ENCODE measurements at regions of chr5 and their contacts with region 1.

Region 1: GRCh38 chr5:122845229-122846050 is at the start of gene SNX24:
- DNase-seq: peak; percentile 91
- H3K4me3 Mint-ChIP-seq: peak within 1 kb of the TSS; percentile 86
- H3K27ac Mint-ChIP-seq: no peak within 1 kb of the TSS
- H3K4me1 Mint-ChIP-seq: peaks cover 19% of the 10 kb centered on the region
- H3K27me3 Mint-ChIP-seq: peaks cover 33% of the 10 kb centered on the region
- total RNA-seq, gene SNX24: 0.37 and 0.45 TPM in 2 replicates

Region 2: GRCh38 chr5:122774861-122775549 is 70.4 kb before region 1 on chr5 and contains the start of gene SNX2:
- intact Hi-C with region 1: loop called (anchors 1 kb)
- DNase-seq: peak; percentile 95
- H3K4me3 Mint-ChIP-seq: peak within 1 kb of the TSS; percentile 94
- H3K27ac Mint-ChIP-seq: peak within 1 kb of the TSS; percentile 86
- H3K4me1 Mint-ChIP-seq: peaks cover 16% of the 10 kb centered on the region
- H3K27me3 Mint-ChIP-seq: peaks cover 23% of the 10 kb centered on the region
- total RNA-seq, gene SNX2: 33.8 and 36.5 TPM in 2 replicates

Region 3: DNA sequence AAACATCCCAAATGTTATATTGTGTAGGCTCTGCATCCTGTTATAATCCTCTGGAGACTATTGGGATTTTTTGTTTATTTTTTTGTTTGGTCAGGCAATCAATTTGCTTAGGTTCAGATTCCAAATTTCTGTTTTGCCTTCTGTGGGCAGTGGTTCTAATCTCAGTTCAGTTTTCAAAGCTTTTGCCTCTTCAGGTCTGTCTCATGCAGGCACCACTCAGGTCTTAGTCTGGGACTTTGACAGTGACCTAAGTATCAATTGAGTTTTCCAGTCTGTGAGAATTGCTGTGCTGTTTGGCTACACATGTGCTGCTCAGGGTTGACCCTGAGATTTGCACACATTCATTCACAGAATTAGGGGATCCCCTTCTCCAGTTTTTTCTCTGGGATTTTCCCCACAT is 56.4 kb before region 1 on chr5:
- intact Hi-C with region 1: no loop called
- DNase-seq: no peak
- H3K4me3 Mint-ChIP-seq: no peak overlapping the region
- H3K27ac Mint-ChIP-seq: no peak overlapping the region
- H3K4me1 Mint-ChIP-seq: no peaks in the 10 kb centered on the region
- H3K27me3 Mint-ChIP-seq: no peaks in the 10 kb centered on the region